ENCODE measurements at regions of chr6 and their contacts with region 1.

Region 1: GRCh38 chr6:35247642-35248231 is 11.8 kb upstream of the ZNF76 start:
- DNase-seq: no peak
- ATAC-seq: no peak
- H3K4me3 ChIP-seq: no peak overlapping the region
- H3K4me3 Mint-ChIP-seq: no peak overlapping the region
- H3K27ac ChIP-seq: no peak overlapping the region
- H3K27ac Mint-ChIP-seq: peak overlapping the region; percentile 14 to 23
- H3K4me1 ChIP-seq: no peaks in the 10 kb centered on the region
- H3K4me1 Mint-ChIP-seq: peaks cover 3 to 23% (median 11%) of the 10 kb centered on the region in 3 donors
- H3K27me3 ChIP-seq: no peaks in the 10 kb centered on the region
- H3K27me3 Mint-ChIP-seq: no peaks in the 10 kb centered on the region

Region 2: DNA sequence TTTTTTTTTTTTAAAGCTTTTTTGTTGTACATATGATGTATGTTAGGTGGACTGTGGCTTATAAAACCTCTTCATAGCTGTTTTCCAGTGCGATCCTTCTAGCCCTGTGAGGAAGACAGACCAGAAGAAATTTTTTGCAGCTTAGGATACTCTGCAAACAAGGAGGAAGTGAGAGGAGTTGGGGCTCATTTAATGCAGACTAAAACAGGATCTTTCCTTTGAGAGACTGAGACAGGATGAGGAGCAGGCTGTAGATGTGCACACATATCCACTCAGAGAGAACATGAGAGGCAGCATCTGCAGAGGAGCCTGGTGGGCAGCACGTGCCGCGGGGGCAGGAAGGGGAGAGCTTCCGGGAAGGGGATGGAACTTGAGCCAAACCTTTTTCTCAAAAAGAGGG is 140.3 kb after region 1 on chr6:
- CTCF ChIA-PET with region 1: interaction called in 1 of 2 experiments, 10 read pairs
- POLR2A ChIA-PET with region 1: no interaction called
- DNase-seq: no peak
- ATAC-seq: no peak
- H3K4me3 ChIP-seq: no peak overlapping the region
- H3K4me3 Mint-ChIP-seq: no peak overlapping the region
- H3K27ac ChIP-seq: no peak overlapping the region
- H3K27ac Mint-ChIP-seq: peak overlapping the region in 1 of 2 donors; percentile 77
- H3K4me1 ChIP-seq: peaks cover 2 to 26% of the 10 kb centered on the region in 2 experiments
- H3K4me1 Mint-ChIP-seq: peaks cover 43 to 50% (median 47%) of the 10 kb centered on the region in 3 donors
- H3K27me3 ChIP-seq: no peaks in the 10 kb centered on the region
- H3K27me3 Mint-ChIP-seq: no peaks in the 10 kb centered on the region